B cell (primary cell): ENCODE measurements at regions of chr20 and their contacts with region 1.

Region 1: DNA sequence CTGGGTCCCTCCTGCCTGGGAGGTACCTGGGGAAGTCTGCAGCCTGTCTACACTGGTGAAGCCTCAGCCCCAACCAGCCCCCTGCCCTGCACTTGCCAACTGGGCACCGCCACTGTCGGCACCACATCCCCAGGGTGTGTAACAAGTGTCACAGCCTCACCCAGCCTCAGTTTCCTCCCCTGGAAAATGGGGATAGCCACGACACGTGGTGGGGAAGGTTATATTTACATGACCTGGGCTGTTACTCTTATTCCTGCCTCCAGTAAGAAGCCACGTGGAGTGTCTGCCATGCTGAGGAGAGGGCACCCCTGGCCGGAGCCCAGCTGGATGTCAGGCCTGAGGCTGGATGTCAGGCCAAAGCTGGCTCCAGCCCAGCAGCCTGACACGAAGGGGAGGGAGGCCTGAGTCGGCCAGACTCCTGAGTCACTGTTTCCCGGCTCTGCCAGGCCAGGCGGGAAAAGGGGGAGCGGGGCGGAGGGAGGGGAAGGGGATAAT is 44.9 kb downstream of the SNAI1 start:
- DNase-seq: no peak
- ATAC-seq: no peak
- H3K4me3 ChIP-seq: no peak overlapping the region
- H3K4me3 Mint-ChIP-seq: no peak overlapping the region
- H3K27ac ChIP-seq: no peak overlapping the region
- H3K27ac Mint-ChIP-seq: no peak overlapping the region
- H3K4me1 ChIP-seq: peaks cover 0 to 4% of the 10 kb centered on the region in 2 donors
- H3K4me1 Mint-ChIP-seq: peaks cover 3% of the 10 kb centered on the region
- H3K27me3 ChIP-seq: no peaks in the 10 kb centered on the region
- H3K27me3 Mint-ChIP-seq: no peaks in the 10 kb centered on the region
- CTCF ChIP-seq: no peak

Region 2: GRCh38 chr20:49989234-49990065 is 38.2 kb before region 1 on chr20:
- CTCF ChIA-PET with region 1: no interaction called
- POLR2A ChIA-PET with region 1: interaction called, 13 read pairs
- intact Hi-C with region 1: no loop called
- DNase-seq: no peak
- ATAC-seq: no peak
- H3K4me3 ChIP-seq: no peak overlapping the region
- H3K4me3 Mint-ChIP-seq: no peak overlapping the region
- H3K27ac ChIP-seq: no peak overlapping the region
- H3K27ac Mint-ChIP-seq: no peak overlapping the region
- H3K4me1 ChIP-seq: peaks cover 3 to 8% of the 10 kb centered on the region in 2 donors
- H3K4me1 Mint-ChIP-seq: peaks cover 6% of the 10 kb centered on the region
- H3K27me3 ChIP-seq: peaks cover 0 to 6% (median 0%) of the 10 kb centered on the region in 4 experiments
- H3K27me3 Mint-ChIP-seq: no peaks in the 10 kb centered on the region
- CTCF ChIP-seq: no peak

Region 3: DNA sequence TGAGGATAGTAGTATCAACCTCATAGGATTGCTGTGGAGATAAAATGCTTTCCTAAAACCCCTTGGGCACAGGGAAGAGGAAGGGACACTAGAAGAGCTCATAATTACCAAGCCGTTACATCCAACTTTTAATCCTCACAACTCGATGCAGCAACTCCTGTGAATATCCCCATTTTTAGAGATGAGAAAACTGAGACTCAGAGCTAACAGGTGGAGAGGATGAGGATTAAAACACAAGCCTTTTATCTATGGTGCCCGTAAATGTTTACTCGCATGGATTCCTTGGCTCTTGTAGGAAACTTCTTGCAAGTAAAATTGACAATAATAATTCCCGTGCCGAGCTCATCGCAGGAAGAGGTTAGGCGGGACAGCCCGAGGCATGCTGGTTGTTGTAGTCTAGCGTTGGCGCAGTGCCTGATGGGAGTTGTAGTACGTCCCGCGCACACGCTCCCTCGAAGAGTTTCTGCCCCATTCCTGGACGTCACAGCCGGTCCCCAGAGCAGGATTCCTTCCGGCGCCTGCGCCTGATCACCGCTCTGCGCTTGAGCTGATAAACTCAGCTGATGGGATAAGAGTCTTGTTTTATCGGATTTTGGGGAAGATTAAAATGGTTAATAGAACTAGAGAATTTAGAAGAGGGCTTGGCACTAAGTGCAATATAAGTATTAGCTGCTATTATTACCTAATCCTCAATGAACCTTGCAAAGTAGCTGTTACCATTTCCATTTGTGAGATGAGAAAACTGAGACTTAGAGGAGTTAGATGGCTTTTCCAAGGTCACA is 88.1 kb after region 1 on chr20:
- CTCF ChIA-PET with region 1: no interaction called
- POLR2A ChIA-PET with region 1: no interaction called
- intact Hi-C with region 1: no loop called
- DNase-seq: peak; percentile 87
- ATAC-seq: peak; percentile 77
- H3K4me3 ChIP-seq: peak overlapping the region; percentile 54 to 78 (median 64)
- H3K4me3 Mint-ChIP-seq: peak overlapping the region; percentile 85
- H3K27ac ChIP-seq: peak overlapping the region; percentile 38 to 53
- H3K27ac Mint-ChIP-seq: peak overlapping the region; percentile 86
- H3K4me1 ChIP-seq: peaks cover 39 to 40% of the 10 kb centered on the region in 2 donors
- H3K4me1 Mint-ChIP-seq: peaks cover 56% of the 10 kb centered on the region
- H3K27me3 ChIP-seq: no peaks in the 10 kb centered on the region
- H3K27me3 Mint-ChIP-seq: no peaks in the 10 kb centered on the region
- CTCF ChIP-seq: no peak